ENCODE measurements at regions of chr1 and their contacts with region 1.

Region 1: DNA sequence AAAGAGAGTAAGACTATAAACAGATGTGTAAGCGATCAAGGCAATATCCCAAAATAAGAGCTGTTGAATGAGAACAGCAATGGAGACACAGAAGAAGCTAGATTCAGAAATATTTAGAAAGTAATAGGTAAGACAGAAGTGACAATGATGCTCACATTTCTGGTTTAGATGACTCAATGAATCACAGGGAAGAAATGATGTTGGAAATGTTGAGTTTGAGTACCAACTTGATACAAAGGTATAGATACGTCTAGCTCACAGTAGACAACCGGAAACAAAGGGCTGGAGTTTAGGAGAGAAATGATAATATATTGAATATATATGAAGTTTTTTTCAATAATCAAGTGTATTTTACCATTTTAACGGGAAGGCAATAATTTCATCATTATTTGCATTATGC is 6.5 kb downstream of the GATAD2B start:
- DNase-seq: no peak
- ATAC-seq: no peak
- H3K4me3 ChIP-seq: no peak overlapping the region
- H3K4me3 Mint-ChIP-seq: no peak overlapping the region
- H3K27ac ChIP-seq: no peak overlapping the region
- H3K27ac Mint-ChIP-seq: no peak overlapping the region
- H3K4me1 ChIP-seq: peaks cover 35 to 47% of the 10 kb centered on the region in 2 experiments
- H3K4me1 Mint-ChIP-seq: peaks cover 64 to 73% (median 69%) of the 10 kb centered on the region in 3 donors
- H3K27me3 ChIP-seq: no peaks in the 10 kb centered on the region
- H3K27me3 Mint-ChIP-seq: no peaks in the 10 kb centered on the region

Region 2: DNA sequence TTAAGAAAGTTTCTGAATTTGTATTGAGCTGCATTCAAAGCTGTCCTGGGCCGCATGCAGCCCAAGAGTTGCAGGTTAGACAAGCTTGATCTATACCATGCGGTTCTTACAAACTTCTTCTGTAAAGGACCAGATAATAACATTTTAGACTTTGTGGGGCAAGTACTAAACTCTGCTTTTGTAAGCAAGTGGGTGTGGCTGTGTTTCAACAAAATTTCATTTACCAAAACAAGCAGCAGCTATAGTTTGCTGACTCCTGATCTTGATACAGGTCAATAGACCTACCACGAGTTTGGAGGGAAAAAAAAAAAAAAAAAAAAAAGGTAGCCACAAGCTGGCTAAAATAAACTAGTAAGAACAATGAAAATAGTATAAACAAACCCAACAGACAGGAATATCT is 40.9 kb before region 1 on chr1:
- CTCF ChIA-PET with region 1: no interaction called
- POLR2A ChIA-PET with region 1: interaction called in 1 of 2 experiments, 13 read pairs
- DNase-seq: no peak
- ATAC-seq: no peak
- H3K4me3 ChIP-seq: no peak overlapping the region
- H3K4me3 Mint-ChIP-seq: no peak overlapping the region
- H3K27ac ChIP-seq: no peak overlapping the region
- H3K27ac Mint-ChIP-seq: peak overlapping the region in 1 of 2 donors; percentile 40
- H3K4me1 ChIP-seq: peaks cover 2 to 24% of the 10 kb centered on the region in 2 experiments
- H3K4me1 Mint-ChIP-seq: peaks cover 46 to 55% (median 50%) of the 10 kb centered on the region in 3 donors
- H3K27me3 ChIP-seq: no peaks in the 10 kb centered on the region
- H3K27me3 Mint-ChIP-seq: no peaks in the 10 kb centered on the region